Common myeloid progenitor, CD34-positive (primary cell): ENCODE measurements at regions of chr16 and their contacts with region 1.

Region 1: DNA sequence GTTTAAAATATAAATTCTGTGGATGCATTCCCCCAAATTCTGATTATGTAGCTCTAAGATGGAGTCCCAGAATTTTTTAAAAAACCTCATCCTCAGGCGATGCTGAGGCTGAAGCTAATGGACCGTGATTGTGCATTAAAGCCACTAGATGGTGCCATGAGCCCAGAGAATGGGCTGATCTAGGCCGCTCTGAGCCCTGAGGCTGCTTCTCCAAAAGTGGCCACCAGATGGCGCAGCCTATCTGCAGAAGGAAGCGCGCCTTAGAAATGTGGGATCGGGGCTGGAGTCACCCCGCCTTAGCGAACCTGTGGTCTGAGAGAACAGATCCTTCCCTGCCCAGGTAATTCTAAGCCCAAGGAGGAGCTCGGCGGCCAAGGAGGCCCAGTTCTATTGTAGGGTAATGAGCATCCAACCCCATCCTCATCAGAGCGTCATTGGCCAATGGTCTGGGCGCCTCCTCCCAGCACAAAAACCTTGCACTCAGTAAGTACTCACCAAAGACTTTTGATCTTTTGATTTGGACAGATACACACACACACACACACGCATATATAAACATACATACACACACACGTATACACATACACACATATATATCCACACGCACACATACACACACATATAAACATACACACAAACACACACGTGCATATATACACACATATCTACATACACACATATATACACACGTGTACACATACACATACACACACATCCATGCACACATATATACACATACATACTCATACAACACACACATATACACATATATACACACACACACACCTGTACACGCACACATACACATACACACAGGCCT is 13.7 kb upstream of the MMP2 start:
- DNase-seq: peak; percentile 83 to 93 (median 87)
- H3K4me3 ChIP-seq: peak overlapping the region in 2 of 7 experiments; percentile 30 to 57
- H3K27ac ChIP-seq: no peak overlapping the region
- H3K4me1 ChIP-seq: peaks cover 0 to 5% (median 3%) of the 10 kb centered on the region in 4 experiments
- H3K27me3 ChIP-seq: peaks cover 0 to under 1% (median 0%) of the 10 kb centered on the region in 5 experiments

Region 2: GRCh38 chr16:55453909-55454308 is 11.4 kb before region 1 on chr16:
- CTCF ChIA-PET with region 1: interaction called, 12 read pairs
- POLR2A ChIA-PET with region 1: no interaction called
- DNase-seq: no peak
- H3K4me3 ChIP-seq: no peak overlapping the region
- H3K27ac ChIP-seq: no peak overlapping the region
- H3K4me1 ChIP-seq: no peaks in the 10 kb centered on the region
- H3K27me3 ChIP-seq: no peaks in the 10 kb centered on the region

Region 3: GRCh38 chr16:55494994-55495421 is 29.7 kb after region 1 on chr16:
- CTCF ChIA-PET with region 1: interaction called, 76 read pairs
- POLR2A ChIA-PET with region 1: interaction called, 3 read pairs
- DNase-seq: peak; percentile 65 to 78 (median 77)
- H3K4me3 ChIP-seq: no peak overlapping the region
- H3K27ac ChIP-seq: no peak overlapping the region
- H3K4me1 ChIP-seq: peaks cover 0 to 48% (median 32%) of the 10 kb centered on the region in 4 experiments
- H3K27me3 ChIP-seq: no peaks in the 10 kb centered on the region

Region 4: GRCh38 chr16:55529018-55529417 is 63.7 kb after region 1 on chr16:
- CTCF ChIA-PET with region 1: interaction called, 10 read pairs
- POLR2A ChIA-PET with region 1: no interaction called
- DNase-seq: no peak
- H3K4me3 ChIP-seq: no peak overlapping the region
- H3K27ac ChIP-seq: no peak overlapping the region
- H3K4me1 ChIP-seq: peaks cover 0 to 2% (median 0%) of the 10 kb centered on the region in 4 experiments
- H3K27me3 ChIP-seq: no peaks in the 10 kb centered on the region

Region 5: GRCh38 chr16:55687802-55688201 is 222.5 kb after region 1 on chr16:
- CTCF ChIA-PET with region 1: interaction called, 335 read pairs
- POLR2A ChIA-PET with region 1: no interaction called
- DNase-seq: peak in 2 of 3 donors; percentile 33 to 41
- H3K4me3 ChIP-seq: no peak overlapping the region
- H3K27ac ChIP-seq: no peak overlapping the region
- H3K4me1 ChIP-seq: peaks cover 0 to 16% (median 5%) of the 10 kb centered on the region in 4 experiments
- H3K27me3 ChIP-seq: no peaks in the 10 kb centered on the region

Region 6: DNA sequence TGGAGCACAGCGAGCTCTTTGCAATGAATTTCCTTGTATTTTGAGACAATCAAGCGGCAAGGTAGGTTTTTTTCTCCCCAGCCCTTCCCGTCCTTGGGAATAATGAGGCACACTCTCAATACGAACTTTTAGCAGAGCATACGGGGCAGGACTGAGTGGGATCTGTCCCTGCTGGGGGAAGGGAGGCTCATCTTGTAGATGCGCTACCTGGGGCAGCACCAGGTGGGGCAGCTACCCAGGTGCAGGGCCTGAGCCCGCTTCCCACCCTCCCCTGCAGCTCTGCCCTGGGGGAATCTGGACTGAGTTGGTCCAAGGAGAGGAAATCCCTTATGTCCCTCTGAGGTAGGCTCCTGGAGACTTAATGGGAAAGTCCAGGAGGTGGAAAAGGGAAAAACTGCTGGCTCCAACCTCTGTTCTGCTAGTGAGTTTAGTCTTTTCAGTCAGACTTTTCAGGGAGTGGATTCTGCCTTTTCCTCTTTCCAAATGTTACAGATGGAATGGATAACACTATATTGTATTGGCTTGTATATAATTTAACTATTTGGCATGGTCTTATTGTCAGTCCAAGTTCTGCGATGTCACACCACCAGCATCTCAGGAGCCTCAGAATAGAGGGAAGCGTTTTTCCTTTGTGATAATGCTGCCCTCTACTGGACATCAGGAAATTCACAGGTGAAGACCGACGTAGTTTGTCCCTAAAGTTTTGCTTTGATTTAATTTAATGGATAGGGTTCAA is 377.2 kb after region 1 on chr16:
- CTCF ChIA-PET with region 1: interaction called, 15 read pairs
- POLR2A ChIA-PET with region 1: no interaction called
- DNase-seq: peak; percentile 51 to 66 (median 58)
- H3K4me3 ChIP-seq: no peak overlapping the region
- H3K27ac ChIP-seq: no peak overlapping the region
- H3K4me1 ChIP-seq: peaks cover 0 to 6% (median 0%) of the 10 kb centered on the region in 4 experiments
- H3K27me3 ChIP-seq: peaks cover 2 to 13% (median 3%) of the 10 kb centered on the region in 5 experiments